ENCODE measurements at regions of chr19 and their contacts with region 1.

Region 1: GRCh38 chr19:11435058-11435832 is at the starts of genes ODAD3 and PRKCSH:
- DNase-seq: peak; percentile 100
- H3K4me3 ChIP-seq: peak within 1 kb of the TSS; percentile 67
- H3K27ac ChIP-seq: peak within 1 kb of the TSS; percentile 82
- H3K4me1 ChIP-seq: peaks cover 13% of the 10 kb centered on the region
- H3K27me3 ChIP-seq: no peaks in the 10 kb centered on the region
- CTCF ChIP-seq: peak; percentile 91
- total RNA-seq, gene ODAD3: 0.39 and 1.4 TPM in 2 replicates
- total RNA-seq, gene PRKCSH: 456 and 468 TPM in 2 replicates

Region 2: DNA sequence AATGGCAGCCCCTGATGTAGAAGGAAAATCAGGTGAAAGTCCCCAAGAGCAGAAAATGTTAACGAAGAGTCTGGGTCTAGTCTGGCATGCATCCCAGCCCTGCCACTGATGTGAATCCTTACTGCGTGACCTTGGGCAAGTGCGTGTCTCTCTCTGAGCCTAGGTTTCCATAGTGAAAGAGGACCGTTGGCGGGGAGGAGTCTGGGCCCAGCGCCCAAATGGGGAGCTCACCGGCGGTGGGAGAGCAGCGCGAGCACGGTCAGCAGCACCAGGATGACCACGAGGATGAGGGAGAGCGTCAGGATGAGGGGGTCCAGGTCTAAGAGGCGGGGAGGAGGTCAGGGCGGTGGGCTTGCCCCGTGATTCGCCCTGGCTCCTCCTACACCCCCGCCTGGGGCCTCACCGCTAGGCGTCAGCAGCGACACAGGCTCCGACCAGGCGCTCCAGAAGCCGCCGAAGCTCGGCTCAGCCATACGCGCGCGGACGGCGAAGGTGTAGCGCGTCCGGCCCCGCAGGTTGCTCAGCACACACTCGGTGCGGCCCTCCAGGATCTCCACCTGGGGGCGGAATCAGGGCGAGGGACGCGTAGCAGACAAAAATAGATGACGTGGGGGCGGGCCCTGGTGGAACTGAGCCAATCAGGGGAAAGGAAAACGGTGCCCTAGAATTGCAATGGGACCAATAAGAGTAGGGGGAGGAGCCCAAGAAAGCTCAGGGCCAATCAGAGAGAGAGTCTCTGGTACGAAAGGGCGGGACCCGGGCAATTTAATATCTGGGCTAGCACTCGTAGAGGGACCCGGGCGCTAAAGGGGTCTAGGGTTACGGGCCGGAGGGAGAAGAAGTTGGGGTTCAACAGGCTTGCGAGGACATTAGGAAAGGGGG is 54.4 kb before region 1 on chr19:
- CTCF ChIA-PET with region 1: interaction called, 14 read pairs
- POLR2A ChIA-PET with region 1: no interaction called
- intact Hi-C with region 1: loop called (anchors 5 kb)
- DNase-seq: peak; percentile 99
- H3K4me3 ChIP-seq: peak overlapping the region; percentile 53
- H3K27ac ChIP-seq: peak overlapping the region; percentile 34
- H3K4me1 ChIP-seq: peaks cover 26% of the 10 kb centered on the region
- H3K27me3 ChIP-seq: no peaks in the 10 kb centered on the region
- CTCF ChIP-seq: peak; percentile 83

Region 3: GRCh38 chr19:11399667-11400066 is 35.6 kb before region 1 on chr19:
- CTCF ChIA-PET with region 1: no interaction called
- POLR2A ChIA-PET with region 1: no interaction called
- intact Hi-C with region 1: no loop called
- DNase-seq: no peak
- H3K4me3 ChIP-seq: no peak overlapping the region
- H3K27ac ChIP-seq: no peak overlapping the region
- H3K4me1 ChIP-seq: no peaks in the 10 kb centered on the region
- H3K27me3 ChIP-seq: no peaks in the 10 kb centered on the region
- CTCF ChIP-seq: no peak

Region 4: DNA sequence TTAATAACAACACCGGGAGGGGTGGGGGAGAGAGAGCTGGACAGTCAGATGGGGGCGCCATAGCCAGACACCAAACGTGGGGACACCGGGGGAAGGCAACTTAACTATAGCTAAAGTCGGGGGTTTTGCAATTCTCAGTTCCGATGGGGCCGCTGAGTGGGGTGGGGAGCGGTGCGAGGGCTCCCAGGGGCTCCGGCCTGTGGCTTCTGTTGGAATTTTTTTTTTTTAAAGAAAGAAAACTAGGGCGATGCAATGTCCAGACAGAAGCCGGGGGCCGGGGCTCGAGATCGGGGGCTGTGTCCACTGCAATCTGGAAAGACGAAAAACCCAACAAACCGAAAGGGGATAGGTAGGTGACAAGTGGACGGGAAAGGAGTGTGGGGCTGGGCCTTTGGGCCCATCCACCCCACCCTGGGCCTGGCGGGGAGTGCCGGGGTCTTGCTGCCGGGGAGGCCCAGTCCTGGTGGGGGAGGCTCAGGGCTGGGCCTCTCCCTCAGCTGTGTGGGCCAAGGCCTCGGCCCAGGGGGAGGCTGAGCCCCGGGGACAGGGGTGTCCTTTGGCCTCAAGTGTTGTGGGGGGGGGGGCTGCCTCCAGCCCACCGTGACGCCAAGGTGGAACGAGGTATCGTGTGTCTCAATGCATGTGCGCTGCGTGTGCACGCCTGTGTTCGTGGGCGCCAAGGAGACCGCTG is 17.5 kb after region 1 on chr19:
- CTCF ChIA-PET with region 1: no interaction called
- POLR2A ChIA-PET with region 1: no interaction called
- intact Hi-C with region 1: no loop called
- DNase-seq: no peak
- H3K4me3 ChIP-seq: no peak overlapping the region
- H3K27ac ChIP-seq: peak overlapping the region; percentile 58
- H3K4me1 ChIP-seq: peaks cover 23% of the 10 kb centered on the region
- H3K27me3 ChIP-seq: no peaks in the 10 kb centered on the region
- CTCF ChIP-seq: peak; percentile 58

Region 5: GRCh38 chr19:11570039-11570462 is 134.8 kb after region 1 on chr19:
- CTCF ChIA-PET with region 1: no interaction called
- POLR2A ChIA-PET with region 1: no interaction called
- intact Hi-C with region 1: no loop called
- DNase-seq: no peak
- H3K4me3 ChIP-seq: no peak overlapping the region
- H3K27ac ChIP-seq: no peak overlapping the region
- H3K4me1 ChIP-seq: no peaks in the 10 kb centered on the region
- H3K27me3 ChIP-seq: no peaks in the 10 kb centered on the region
- CTCF ChIP-seq: no peak

Region 6: GRCh38 chr19:11693495-11694173 is 258.4 kb after region 1 on chr19:
- CTCF ChIA-PET with region 1: no interaction called
- POLR2A ChIA-PET with region 1: no interaction called
- intact Hi-C with region 1: no loop called
- DNase-seq: peak; percentile 95
- H3K4me3 ChIP-seq: peak overlapping the region; percentile 73
- H3K27ac ChIP-seq: peak overlapping the region; percentile 83
- H3K4me1 ChIP-seq: no peaks in the 10 kb centered on the region
- H3K27me3 ChIP-seq: no peaks in the 10 kb centered on the region
- CTCF ChIP-seq: no peak; the same call in 1 of the 2 replicates